Mammary epithelial cell (primary cell): ENCODE measurements at regions of chr20 and their contacts with region 1.

Region 1: DNA sequence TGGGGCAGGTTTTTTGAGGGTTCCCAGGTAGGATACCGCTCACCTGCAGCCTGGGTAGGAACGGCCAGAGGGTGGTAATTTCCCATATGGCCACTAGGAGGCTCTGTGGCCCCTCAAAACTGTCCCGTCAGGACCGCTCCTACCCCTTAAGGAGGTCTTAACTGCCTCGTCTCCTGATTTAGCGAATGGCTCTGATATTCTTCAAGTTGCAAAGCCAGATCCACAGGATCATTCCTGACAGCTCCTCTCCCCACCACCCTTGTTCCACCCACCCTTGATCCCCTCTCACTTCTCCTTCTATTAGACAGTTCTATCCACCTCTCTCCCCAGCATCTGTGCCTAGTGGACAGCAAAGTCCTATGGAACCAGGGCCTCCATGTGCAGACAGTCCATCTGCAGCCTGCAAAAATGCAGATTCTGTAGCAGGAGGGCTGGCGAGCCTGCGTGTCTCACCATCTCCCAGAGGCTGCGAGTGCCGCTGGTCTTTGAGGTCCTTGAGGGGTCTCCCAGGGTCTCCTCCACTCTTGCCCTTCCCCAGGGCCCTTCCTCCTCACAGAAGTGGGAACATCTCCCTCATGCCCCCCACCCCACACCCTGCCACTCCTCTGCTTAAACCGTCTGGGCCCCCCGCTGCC is 34.3 kb upstream of the ZBP1 start:
- DNase-seq: peak; percentile 38
- H3K4me3 ChIP-seq: no peak overlapping the region
- H3K27ac ChIP-seq: no peak overlapping the region
- H3K4me1 ChIP-seq: peaks cover 26% of the 10 kb centered on the region
- H3K27me3 ChIP-seq: no peaks in the 10 kb centered on the region
- CTCF ChIP-seq: peak; percentile 81 to 85

Region 2: DNA sequence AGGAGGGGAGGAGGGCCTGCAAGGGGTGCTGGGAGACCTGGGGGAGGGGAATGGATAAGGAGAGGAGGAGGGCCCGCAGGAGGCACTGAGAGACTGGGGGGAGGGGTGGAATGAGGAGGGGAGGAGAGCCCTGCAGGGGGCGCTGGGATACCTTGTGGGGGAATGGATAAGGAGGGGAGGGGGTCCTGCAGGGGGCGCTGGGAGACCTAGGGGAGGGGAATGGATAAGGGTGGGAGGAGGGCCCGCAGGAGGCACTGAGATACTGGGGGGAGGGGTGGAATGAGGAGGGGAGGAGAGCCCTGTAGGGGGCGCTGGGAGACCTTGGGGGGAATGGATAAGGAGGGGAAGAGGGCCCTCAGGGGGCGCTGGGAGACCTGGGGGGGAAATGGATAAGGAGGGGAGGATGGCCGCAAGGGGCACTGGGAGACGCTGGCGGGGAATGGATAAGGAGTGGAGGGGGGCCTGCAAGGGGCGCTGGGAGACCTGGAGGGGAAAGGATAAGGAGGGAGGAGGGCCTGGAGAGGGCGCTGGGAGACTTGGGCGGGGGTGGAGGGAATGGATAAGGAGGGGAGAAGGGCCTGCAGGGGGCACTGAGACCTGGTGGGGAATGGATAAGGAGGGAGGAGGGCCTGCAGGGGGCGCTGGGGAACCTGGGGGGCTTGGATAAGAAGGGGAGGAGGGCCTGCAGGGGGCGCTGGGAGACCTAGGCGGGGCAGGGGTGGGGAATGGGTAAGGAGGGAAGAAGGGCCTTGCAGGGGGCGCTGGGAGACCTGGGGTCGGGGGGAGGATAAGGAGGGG is 128.2 kb before region 1 on chr20:
- CTCF ChIA-PET with region 1: no interaction called
- dilution Hi-C with region 1: no loop called
- in situ Hi-C with region 1: no loop called
- intact Hi-C with region 1: no loop called
- DNase-seq: no peak
- H3K4me3 ChIP-seq: no peak overlapping the region
- H3K27ac ChIP-seq: no peak overlapping the region
- H3K4me1 ChIP-seq: no peaks in the 10 kb centered on the region
- H3K27me3 ChIP-seq: peaks cover 5% of the 10 kb centered on the region
- CTCF ChIP-seq: no peak

Region 3: GRCh38 chr20:57693002-57693640 is 38.6 kb after region 1 on chr20:
- CTCF ChIA-PET with region 1: no interaction called
- dilution Hi-C with region 1: no loop called
- in situ Hi-C with region 1: no loop called
- intact Hi-C with region 1: loop called (anchors 1 kb)
- DNase-seq: peak; percentile 99
- H3K4me3 ChIP-seq: no peak overlapping the region
- H3K27ac ChIP-seq: peak overlapping the region; percentile 88
- H3K4me1 ChIP-seq: peaks cover 93% of the 10 kb centered on the region
- H3K27me3 ChIP-seq: no peaks in the 10 kb centered on the region
- CTCF ChIP-seq: peak; percentile 49 to 69

Region 4: DNA sequence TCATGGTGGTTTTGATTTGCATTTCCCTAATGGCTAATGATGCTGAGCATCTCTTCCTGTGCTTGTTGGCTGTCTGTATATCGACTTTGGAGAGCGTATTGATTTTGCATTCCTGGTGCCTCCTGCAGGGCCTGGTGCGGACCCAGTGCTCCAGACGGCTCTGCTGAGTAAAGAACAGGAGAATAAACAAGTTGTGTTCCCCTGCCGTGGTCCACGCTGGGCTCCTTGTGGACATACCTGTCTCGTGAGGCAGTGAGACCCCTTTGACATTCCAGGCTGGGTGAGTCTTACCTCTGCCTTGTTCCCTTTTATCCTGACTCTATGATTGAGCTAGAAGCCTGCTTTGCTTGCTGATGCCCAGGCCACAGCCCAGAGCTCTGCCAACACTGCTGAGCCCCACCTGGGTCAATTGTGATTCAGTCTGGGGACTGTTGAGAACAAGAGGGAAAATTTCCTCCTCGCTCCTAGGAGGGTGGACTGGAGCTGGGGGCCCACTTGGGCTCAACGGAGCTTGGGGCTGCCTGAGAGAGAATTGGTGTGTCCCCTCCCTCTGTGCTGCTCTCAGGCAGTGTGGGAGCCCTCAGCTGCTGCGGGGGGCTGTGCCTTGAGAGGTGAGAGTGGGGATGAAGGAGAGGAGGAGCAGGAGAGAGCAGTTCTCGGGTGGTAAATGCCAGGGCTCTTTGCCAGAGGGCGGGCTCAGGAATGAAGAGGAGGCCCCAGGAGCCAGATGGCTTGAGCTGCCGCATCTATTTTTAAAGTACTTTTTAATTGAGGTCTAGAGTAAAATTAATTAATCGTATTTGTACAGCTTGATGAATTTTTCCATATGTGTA is 99.1 kb after region 1 on chr20:
- CTCF ChIA-PET with region 1: no interaction called
- dilution Hi-C with region 1: loop called (anchors 5 kb)
- in situ Hi-C with region 1: no loop called
- intact Hi-C with region 1: no loop called
- DNase-seq: no peak
- H3K4me3 ChIP-seq: no peak overlapping the region
- H3K27ac ChIP-seq: no peak overlapping the region
- H3K4me1 ChIP-seq: peaks cover 6% of the 10 kb centered on the region
- H3K27me3 ChIP-seq: peaks cover 5% of the 10 kb centered on the region
- CTCF ChIP-seq: no peak

Region 5: GRCh38 chr20:58028123-58028522 is 373.6 kb after region 1 on chr20:
- CTCF ChIA-PET with region 1: interaction called, 3 read pairs
- dilution Hi-C with region 1: no loop called
- in situ Hi-C with region 1: no loop called
- intact Hi-C with region 1: loop called (anchors 1 kb)
- DNase-seq: no peak
- H3K4me3 ChIP-seq: no peak overlapping the region
- H3K27ac ChIP-seq: no peak overlapping the region
- H3K4me1 ChIP-seq: no peaks in the 10 kb centered on the region
- H3K27me3 ChIP-seq: no peaks in the 10 kb centered on the region
- CTCF ChIP-seq: peak; percentile 16 to 58